GM10248 (cell line): ENCODE measurements at regions of chr4 and their contacts with region 1.

Region 1: GRCh38 chr4:153466081-153466948 is at the start of gene TMEM131L:
- DNase-seq: peak; percentile 86
- CTCF ChIP-seq: peak; percentile 26

Region 2: GRCh38 chr4:153432968-153433753 is 33.2 kb before region 1 on chr4:
- CTCF ChIA-PET with region 1: interaction called, 35 read pairs
- POLR2A ChIA-PET with region 1: interaction called, 8 read pairs
- DNase-seq: peak; percentile 83
- CTCF ChIP-seq: peak; percentile 82

Region 3: GRCh38 chr4:153488006-153488891 is 21.9 kb after region 1 on chr4:
- CTCF ChIA-PET with region 1: interaction called, 54 read pairs
- POLR2A ChIA-PET with region 1: interaction called, 3 read pairs
- DNase-seq: peak; percentile 71
- CTCF ChIP-seq: no peak

Region 4: DNA sequence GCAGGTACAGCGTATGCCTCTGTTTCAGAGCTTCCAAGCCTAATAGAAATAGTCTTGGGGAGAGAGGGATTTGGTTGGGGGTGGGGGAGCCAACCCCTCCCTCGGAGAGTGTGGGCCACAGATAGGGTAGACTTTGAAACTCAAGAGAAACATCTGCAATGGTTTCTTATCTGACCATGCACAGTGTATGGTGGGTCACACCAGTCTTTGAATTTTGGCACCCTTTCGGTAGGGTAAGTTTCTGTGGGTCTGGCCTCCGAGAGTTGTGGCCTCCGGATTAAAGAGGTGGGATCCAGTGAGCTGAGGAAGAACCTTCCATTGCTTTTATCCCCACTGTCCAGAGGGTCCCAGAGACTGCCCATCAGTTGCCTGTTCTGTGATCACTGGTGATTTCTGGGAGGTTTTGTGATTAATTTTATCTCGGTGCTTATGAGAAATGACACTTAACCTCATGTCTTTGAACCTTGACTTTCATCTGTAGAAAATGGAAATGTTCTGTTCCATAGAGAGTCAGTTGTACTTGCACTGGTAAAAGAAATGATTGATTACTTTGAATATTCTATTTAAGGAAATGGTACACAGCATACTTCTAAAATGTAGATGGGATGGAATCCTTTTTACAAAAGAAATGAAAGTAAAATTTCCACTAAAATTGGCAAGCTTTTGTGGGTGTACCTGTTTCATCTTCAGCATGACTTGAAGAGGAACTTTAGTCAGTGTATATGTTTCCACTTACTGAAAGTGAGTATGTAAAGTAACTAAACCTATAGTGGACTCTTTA is 62.6 kb after region 1 on chr4:
- CTCF ChIA-PET with region 1: interaction called, 10 read pairs
- POLR2A ChIA-PET with region 1: no interaction called
- DNase-seq: no peak
- CTCF ChIP-seq: no peak